Activated CD4-positive, alpha-beta memory T cell treated with anti-CD3 and anti-CD28 coated beads, Interleukin-2, amount 10 ng/mL, durations not matched to agents 7 days and 5 days (primary cell): ENCODE measurements at regions of chr5 and their contacts with region 1.

Region 1: DNA sequence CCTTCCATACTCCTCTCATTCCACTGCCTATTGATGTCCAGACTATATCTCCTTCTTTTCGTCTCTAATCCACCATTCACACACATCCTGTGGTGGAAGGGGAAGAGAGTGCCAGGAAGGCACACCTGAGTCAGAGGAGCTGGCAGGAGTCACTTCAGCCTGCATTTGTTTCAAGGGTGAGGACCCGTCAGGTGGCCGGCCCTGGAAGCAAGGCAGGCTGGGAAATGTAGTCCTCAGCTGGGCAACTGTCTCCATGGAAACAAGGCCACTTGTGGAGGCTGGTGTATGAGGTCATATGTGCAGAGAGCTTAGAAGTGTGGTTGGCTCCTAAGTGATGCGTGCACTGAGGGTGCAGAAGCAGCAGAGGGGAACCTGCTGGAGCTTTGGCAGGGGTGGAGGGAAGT is 278.4 kb downstream of the NSG2 start:
- DNase-seq: no peak
- H3K4me3 Mint-ChIP-seq: no peak overlapping the region
- H3K27ac Mint-ChIP-seq: no peak overlapping the region
- H3K4me1 Mint-ChIP-seq: no peaks in the 10 kb centered on the region
- H3K27me3 Mint-ChIP-seq: peaks cover 9% of the 10 kb centered on the region

Region 2: GRCh38 chr5:174283211-174284005 is 40.5 kb before region 1 on chr5:
- CTCF ChIA-PET with region 1: no interaction called
- POLR2A ChIA-PET with region 1: no interaction called
- DNase-seq: no peak
- H3K4me3 Mint-ChIP-seq: no peak overlapping the region
- H3K27ac Mint-ChIP-seq: no peak overlapping the region
- H3K4me1 Mint-ChIP-seq: no peaks in the 10 kb centered on the region
- H3K27me3 Mint-ChIP-seq: no peaks in the 10 kb centered on the region

Region 3: GRCh38 chr5:174311531-174312269 is 12.2 kb before region 1 on chr5:
- CTCF ChIA-PET with region 1: interaction called, 16 read pairs
- POLR2A ChIA-PET with region 1: no interaction called
- DNase-seq: peak; percentile 63
- H3K4me3 Mint-ChIP-seq: no peak overlapping the region
- H3K27ac Mint-ChIP-seq: no peak overlapping the region
- H3K4me1 Mint-ChIP-seq: peaks cover 1% of the 10 kb centered on the region
- H3K27me3 Mint-ChIP-seq: peaks cover 14% of the 10 kb centered on the region